ENCODE measurements at regions of chr12 and their contacts with region 1.

Region 1: GRCh38 chr12:82685790-82686167 is 927 bp upstream of the TMTC2 start:
- DNase-seq: peak; percentile 98
- H3K4me3 ChIP-seq: peak overlapping the region; percentile 88
- H3K27ac ChIP-seq: peak overlapping the region; percentile 97
- H3K4me1 ChIP-seq: peaks cover 4% of the 10 kb centered on the region
- H3K27me3 ChIP-seq: no peaks in the 10 kb centered on the region
- CTCF ChIP-seq: peak; percentile 78

Region 2: DNA sequence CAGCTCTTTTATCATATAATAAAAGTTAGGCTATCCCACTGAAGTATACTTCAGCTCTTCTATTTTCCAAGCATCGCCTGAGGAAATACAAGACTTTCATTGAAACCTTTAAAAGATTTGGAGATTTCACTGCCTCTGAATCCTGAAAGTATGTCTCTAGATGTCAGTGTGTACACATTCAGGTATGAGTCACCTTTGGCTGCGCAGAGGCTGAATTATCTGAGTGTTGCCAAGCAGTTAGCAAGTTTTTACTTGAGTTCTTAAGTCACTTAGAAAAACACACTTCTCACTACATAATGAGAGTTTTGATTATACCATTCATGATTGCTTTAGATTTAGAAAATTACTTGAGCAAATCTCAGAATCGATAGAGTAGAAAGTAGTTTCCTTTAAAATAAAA is 211.2 kb after region 1 on chr12:
- intact Hi-C with region 1: loop called (anchors 10 kb)
- DNase-seq: peak; percentile 27
- H3K4me3 ChIP-seq: no peak overlapping the region
- H3K27ac ChIP-seq: peak overlapping the region; percentile 55
- H3K4me1 ChIP-seq: no peaks in the 10 kb centered on the region
- H3K27me3 ChIP-seq: no peaks in the 10 kb centered on the region
- CTCF ChIP-seq: no peak

Region 3: GRCh38 chr12:83823431-83823963 is 1137.7 kb after region 1 on chr12:
- intact Hi-C with region 1: loop called (anchors 10 kb)
- DNase-seq: peak; percentile 20
- H3K4me3 ChIP-seq: no peak overlapping the region
- H3K27ac ChIP-seq: no peak overlapping the region
- H3K4me1 ChIP-seq: no peaks in the 10 kb centered on the region
- H3K27me3 ChIP-seq: no peaks in the 10 kb centered on the region
- CTCF ChIP-seq: no peak

Measured in colonic mucosa (tissue), 4 donors.